H1 (cell line): ENCODE measurements at regions of chr12 and their contacts with region 1.

Region 1: GRCh38 chr12:12736759-12737676 is 19.9 kb downstream of the CDKN1B start:
- DNase-seq: no peak
- H3K4me3 ChIP-seq: no peak overlapping the region
- H3K27ac ChIP-seq: no peak overlapping the region
- H3K4me1 ChIP-seq: no peaks in the 10 kb centered on the region
- H3K27me3 ChIP-seq: no peaks in the 10 kb centered on the region
- CTCF ChIP-seq: peak; percentile 10 to 33 (median 26); a peak in 3 of 4 replicates
- EP300 ChIP-seq: no peak
- POLR2A ChIP-seq: no peak
- RAD21 ChIP-seq: peak; percentile 34 to 41

Region 2: DNA sequence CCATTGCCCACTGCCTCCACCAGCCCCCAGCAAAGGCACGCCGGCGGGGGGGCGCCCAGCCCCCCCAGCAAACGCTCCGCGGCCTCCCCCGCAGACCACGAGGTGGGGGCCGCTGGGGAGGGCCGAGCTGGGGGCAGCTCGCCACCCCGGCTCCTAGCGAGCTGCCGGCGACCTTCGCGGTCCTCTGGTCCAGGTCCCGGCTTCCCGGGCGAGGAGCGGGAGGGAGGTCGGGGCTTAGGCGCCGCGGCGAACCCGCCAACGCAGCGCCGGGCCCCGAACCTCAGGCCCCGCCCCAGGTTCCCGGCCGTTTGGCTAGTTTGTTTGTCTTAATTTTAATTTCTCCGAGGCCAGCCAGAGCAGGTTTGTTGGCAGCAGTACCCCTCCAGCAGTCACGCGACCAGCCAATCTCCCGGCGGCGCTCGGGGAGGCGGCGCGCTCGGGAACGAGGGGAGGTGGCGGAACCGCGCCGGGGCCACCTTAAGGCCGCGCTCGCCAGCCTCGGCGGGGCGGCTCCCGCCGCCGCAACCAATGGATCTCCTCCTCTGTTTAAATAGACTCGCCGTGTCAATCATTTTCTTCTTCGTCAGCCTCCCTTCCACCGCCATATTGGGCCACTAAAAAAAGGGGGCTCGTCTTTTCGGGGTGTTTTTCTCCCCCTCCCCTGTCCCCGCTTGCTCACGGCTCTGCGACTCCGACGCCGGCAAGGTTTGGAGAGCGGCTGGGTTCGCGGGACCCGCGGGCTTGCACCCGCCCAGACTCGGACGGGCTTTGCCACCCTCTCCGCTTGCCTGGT is 20.0 kb before region 1 on chr12 and contains the start of gene CDKN1B:
- CTCF ChIA-PET with region 1: interaction called, 23 read pairs
- POLR2A ChIA-PET with region 1: interaction called, 4 read pairs
- DNase-seq: peak in 1 of 2 experiments; percentile 82
- H3K4me3 ChIP-seq: peak within 1 kb of the TSS; percentile 89 to 99 (median 94)
- H3K27ac ChIP-seq: peak within 1 kb of the TSS; percentile 82
- H3K4me1 ChIP-seq: peaks cover 5 to 23% (median 14%) of the 10 kb centered on the region in 4 experiments; a peak in 6 of 7 replicates
- H3K27me3 ChIP-seq: peaks cover 0 to 4% (median 0%) of the 10 kb centered on the region in 4 experiments; a peak in 1 of 7 replicates
- CTCF ChIP-seq: no peak
- EP300 ChIP-seq: no peak
- POLR2A ChIP-seq: peak; percentile 65 to 69
- RAD21 ChIP-seq: no peak
- total RNA-seq, gene CDKN1B: 27.2 and 28.8 TPM in 2 replicates

Region 3: GRCh38 chr12:12724661-12725545 is 12.1 kb before region 1 on chr12:
- CTCF ChIA-PET with region 1: interaction called, 23 read pairs
- POLR2A ChIA-PET with region 1: interaction called, 13 read pairs
- DNase-seq: peak in 1 of 2 experiments; percentile 84
- H3K4me3 ChIP-seq: peak overlapping the region; percentile 74 to 98 (median 88)
- H3K27ac ChIP-seq: peak overlapping the region; percentile 88
- H3K4me1 ChIP-seq: peaks cover 0 to 8% (median 0%) of the 10 kb centered on the region in 4 experiments; a peak in 4 of 7 replicates
- H3K27me3 ChIP-seq: peaks cover 0 to 2% (median 0%) of the 10 kb centered on the region in 4 experiments; a peak in 1 of 7 replicates
- CTCF ChIP-seq: peak in 1 of 3 experiments; percentile 8; a peak in 1 of 4 replicates
- EP300 ChIP-seq: peak in 1 of 2 experiments; percentile 41; a peak in 1 of 3 replicates
- POLR2A ChIP-seq: peak; percentile 59 to 90
- RAD21 ChIP-seq: no peak

Region 4: GRCh38 chr12:12757121-12757520 is 20.1 kb after region 1 on chr12:
- CTCF ChIA-PET with region 1: interaction called, 14 read pairs
- POLR2A ChIA-PET with region 1: no interaction called
- DNase-seq: no peak
- H3K4me3 ChIP-seq: no peak overlapping the region
- H3K27ac ChIP-seq: no peak overlapping the region
- H3K4me1 ChIP-seq: no peaks in the 10 kb centered on the region
- H3K27me3 ChIP-seq: no peaks in the 10 kb centered on the region
- CTCF ChIP-seq: no peak
- EP300 ChIP-seq: no peak
- POLR2A ChIP-seq: no peak
- RAD21 ChIP-seq: no peak

Region 5: GRCh38 chr12:12764824-12765223 is 27.8 kb after region 1 on chr12:
- CTCF ChIA-PET with region 1: interaction called, 10 read pairs
- POLR2A ChIA-PET with region 1: no interaction called
- DNase-seq: no peak
- H3K4me3 ChIP-seq: no peak overlapping the region
- H3K27ac ChIP-seq: no peak overlapping the region
- H3K4me1 ChIP-seq: no peaks in the 10 kb centered on the region
- H3K27me3 ChIP-seq: no peaks in the 10 kb centered on the region
- CTCF ChIP-seq: no peak
- EP300 ChIP-seq: no peak
- POLR2A ChIP-seq: no peak
- RAD21 ChIP-seq: no peak

Region 6: DNA sequence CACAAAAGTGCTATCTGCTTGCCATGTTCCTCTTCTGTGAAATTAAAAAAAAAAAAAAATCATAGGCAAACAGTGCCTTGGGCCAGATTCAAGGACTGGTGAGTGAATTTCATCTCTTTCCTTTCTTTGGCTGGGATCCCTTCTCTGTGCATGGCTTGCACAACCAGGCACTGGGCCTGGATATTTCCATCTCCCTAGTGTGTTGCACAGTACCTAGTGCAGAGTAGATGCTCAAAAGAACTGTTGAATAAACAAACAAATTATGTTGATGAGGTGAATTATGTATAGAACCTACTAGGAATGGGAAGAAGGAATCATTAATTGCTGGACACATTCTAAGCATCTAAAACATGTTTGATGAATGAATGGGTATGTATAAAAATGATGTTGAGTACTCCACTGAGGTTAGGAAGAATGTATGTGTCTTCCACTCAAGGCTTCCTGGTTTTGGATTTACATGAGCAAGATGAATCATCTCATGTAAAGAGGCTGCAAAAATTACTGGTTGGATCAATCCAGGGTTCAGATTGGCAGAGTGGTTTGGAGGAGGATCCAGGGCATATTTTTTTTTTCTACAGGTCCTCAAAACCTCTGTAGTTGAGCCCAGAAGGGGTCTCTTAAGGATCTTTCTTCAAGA is 552.8 kb after region 1 on chr12:
- CTCF ChIA-PET with region 1: no interaction called
- POLR2A ChIA-PET with region 1: no interaction called
- DNase-seq: no peak
- H3K4me3 ChIP-seq: no peak overlapping the region
- H3K27ac ChIP-seq: no peak overlapping the region
- H3K4me1 ChIP-seq: no peaks in the 10 kb centered on the region
- H3K27me3 ChIP-seq: no peaks in the 10 kb centered on the region
- CTCF ChIP-seq: no peak
- EP300 ChIP-seq: no peak
- POLR2A ChIP-seq: no peak
- RAD21 ChIP-seq: no peak